ENCODE measurements at regions of chr20 and their contacts with region 1.

Region 1: DNA sequence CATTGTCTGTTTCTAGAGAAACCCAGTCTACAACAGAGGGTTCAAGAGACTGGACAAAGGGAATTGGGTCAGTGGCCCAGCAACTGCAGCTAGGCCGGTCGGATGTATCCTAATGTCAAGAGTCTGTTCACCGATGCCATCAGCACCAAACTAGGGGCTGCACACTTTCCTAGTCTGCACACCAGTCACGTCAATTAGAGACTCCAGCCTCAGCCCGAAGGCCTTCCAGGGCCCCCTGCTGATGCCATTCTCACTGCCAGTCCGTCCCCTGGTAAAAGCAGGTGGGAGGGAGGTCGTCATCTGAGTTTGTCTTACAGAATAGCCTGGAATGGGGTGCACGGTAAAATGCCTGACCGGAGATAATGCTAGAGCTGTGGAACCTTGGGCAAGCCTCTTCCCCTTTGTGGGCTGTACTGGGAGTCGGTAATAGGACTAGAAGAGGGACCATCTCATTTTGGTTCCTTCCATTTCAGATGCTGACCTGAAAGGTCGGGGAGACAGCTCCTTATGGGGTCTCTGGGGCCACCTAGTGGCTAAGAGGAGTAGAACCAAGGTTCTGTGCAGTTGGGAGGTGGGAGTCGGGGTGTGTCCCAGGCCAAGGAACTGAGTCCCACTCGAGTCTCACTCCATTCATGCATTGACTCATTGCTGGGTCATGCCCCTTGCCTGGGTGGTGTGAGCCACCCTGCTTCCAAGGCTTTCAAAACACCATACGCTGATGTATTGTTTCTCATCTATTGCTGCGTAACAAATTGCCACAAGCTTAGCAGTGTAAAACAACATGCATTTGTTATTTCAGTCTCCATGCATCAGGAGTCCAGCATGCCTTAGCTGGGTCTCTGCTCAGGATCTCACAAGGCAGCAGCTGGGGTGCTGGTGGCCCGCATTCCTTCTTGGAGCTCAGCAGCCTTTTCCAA is 5.1 kb downstream of the SOX12 start:
- DNase-seq: peak; percentile 82 to 90 (median 88)
- H3K4me3 ChIP-seq: peak overlapping the region in 1 of 7 experiments; percentile 37
- H3K27ac ChIP-seq: no peak overlapping the region
- H3K4me1 ChIP-seq: peaks cover 10 to 38% (median 33%) of the 10 kb centered on the region in 4 experiments
- H3K27me3 ChIP-seq: no peaks in the 10 kb centered on the region

Region 2: GRCh38 chr20:152131-152530 is 178.4 kb before region 1 on chr20:
- CTCF ChIA-PET with region 1: no interaction called
- POLR2A ChIA-PET with region 1: no interaction called
- DNase-seq: no peak
- H3K4me3 ChIP-seq: no peak overlapping the region
- H3K27ac ChIP-seq: no peak overlapping the region
- H3K4me1 ChIP-seq: no peaks in the 10 kb centered on the region
- H3K27me3 ChIP-seq: peaks cover 0 to 11% (median 3%) of the 10 kb centered on the region in 5 experiments

Region 3: DNA sequence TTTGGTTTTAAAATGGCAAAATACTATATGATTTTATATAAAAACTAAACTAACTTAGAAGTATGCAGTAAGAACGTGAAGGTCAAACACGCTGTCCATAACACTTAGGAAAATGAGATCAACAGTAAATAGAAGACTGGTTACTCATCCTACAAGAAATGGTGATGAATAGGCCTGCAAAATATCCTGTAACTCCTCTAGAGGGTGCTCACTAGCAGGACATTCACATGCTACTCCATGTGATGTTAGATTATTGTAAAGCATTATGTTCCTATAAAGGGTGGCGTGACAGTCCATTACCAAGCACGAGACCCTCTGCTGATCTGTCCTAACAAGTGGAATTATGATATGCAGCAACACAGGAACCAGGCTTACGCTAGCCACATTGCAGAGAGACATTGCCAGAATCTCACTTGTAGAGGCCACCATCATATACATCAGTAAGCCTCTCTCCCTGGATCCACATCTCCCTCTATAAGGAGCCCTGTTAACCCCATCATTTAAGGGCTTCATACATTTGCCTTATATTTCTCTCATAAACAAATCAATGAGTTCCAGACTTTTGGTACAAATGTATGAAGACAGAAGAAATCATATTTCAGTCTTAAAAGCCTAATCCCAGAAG is 121.4 kb before region 1 on chr20:
- CTCF ChIA-PET with region 1: interaction called, 11 read pairs
- POLR2A ChIA-PET with region 1: no interaction called
- DNase-seq: peak; percentile 59 to 77 (median 73)
- H3K4me3 ChIP-seq: no peak overlapping the region
- H3K27ac ChIP-seq: no peak overlapping the region
- H3K4me1 ChIP-seq: no peaks in the 10 kb centered on the region
- H3K27me3 ChIP-seq: peaks cover 0 to 5% (median 0%) of the 10 kb centered on the region in 5 experiments

Region 4: GRCh38 chr20:258963-259362 is 71.5 kb before region 1 on chr20:
- CTCF ChIA-PET with region 1: interaction called, 23 read pairs
- POLR2A ChIA-PET with region 1: no interaction called
- DNase-seq: peak; percentile 45 to 70 (median 67)
- H3K4me3 ChIP-seq: no peak overlapping the region
- H3K27ac ChIP-seq: no peak overlapping the region
- H3K4me1 ChIP-seq: peaks cover 0 to 11% (median 0%) of the 10 kb centered on the region in 4 experiments
- H3K27me3 ChIP-seq: no peaks in the 10 kb centered on the region

Region 5: DNA sequence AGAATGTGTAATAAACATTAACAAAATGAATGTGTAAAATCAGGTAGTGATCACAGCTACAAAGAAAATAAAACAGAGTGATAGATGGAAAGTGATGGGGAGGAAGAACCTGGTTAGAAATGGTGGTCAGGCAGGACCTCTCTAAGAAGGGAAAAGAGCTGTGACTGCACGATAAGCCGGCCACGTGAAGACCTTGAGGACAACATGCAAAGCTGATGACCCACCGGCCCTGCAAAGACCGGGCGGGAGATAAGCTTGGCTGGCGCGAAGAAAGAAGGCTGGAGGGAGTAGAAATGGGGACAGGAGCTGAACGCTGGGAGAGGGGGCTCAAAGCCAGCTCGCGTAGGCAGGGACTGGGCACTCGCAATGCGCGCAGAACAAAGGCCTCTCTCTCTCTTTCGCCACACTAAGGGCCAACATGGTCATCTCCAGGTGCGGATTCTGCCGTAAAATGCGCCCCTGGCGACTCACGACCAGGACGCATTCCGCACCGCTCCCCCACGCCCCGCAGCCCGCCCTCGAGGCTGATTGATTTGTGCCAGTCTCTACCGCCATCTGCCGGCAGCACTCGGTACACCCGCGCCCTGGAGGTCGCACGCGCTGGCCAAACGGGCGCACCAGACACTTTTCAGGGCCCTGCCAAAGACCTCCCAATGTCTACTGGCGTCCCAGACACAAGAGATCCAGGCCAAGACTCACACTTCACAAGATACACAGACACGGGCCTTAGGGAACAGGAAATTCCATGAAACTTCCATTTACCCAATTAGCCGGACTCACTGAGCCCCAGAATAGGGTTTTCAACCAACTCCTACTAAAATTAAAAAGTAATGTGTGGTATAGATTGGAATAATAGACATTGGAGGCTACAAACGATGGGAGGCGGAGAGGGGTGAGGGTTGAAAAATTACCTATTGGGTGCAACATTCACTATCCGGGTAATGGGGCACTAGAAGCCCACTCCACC is 63.6 kb before region 1 on chr20:
- CTCF ChIA-PET with region 1: interaction called, 54 read pairs
- POLR2A ChIA-PET with region 1: no interaction called
- DNase-seq: peak; percentile 85 to 91 (median 89)
- H3K4me3 ChIP-seq: peak overlapping the region; percentile 51 to 89 (median 66)
- H3K27ac ChIP-seq: no peak overlapping the region
- H3K4me1 ChIP-seq: peaks cover 0 to 7% (median 5%) of the 10 kb centered on the region in 4 experiments
- H3K27me3 ChIP-seq: no peaks in the 10 kb centered on the region

Region 6: GRCh38 chr20:278607-279571 is 51.6 kb before region 1 on chr20:
- CTCF ChIA-PET with region 1: interaction called, 13 read pairs
- POLR2A ChIA-PET with region 1: no interaction called
- DNase-seq: peak in 1 of 3 donors; percentile 11
- H3K4me3 ChIP-seq: peak overlapping the region in 1 of 7 experiments; percentile 57
- H3K27ac ChIP-seq: no peak overlapping the region
- H3K4me1 ChIP-seq: no peaks in the 10 kb centered on the region
- H3K27me3 ChIP-seq: no peaks in the 10 kb centered on the region

Region 7: GRCh38 chr20:297925-298765 is 32.3 kb before region 1 on chr20:
- CTCF ChIA-PET with region 1: interaction called, 26 read pairs
- POLR2A ChIA-PET with region 1: interaction called, 4 read pairs
- DNase-seq: peak in 2 of 3 donors; percentile 41 to 45
- H3K4me3 ChIP-seq: peak overlapping the region; percentile 86 to 98 (median 97)
- H3K27ac ChIP-seq: peak overlapping the region; percentile 93 to 95
- H3K4me1 ChIP-seq: peaks cover 17 to 45% (median 32%) of the 10 kb centered on the region in 4 experiments
- H3K27me3 ChIP-seq: no peaks in the 10 kb centered on the region

Region 8: DNA sequence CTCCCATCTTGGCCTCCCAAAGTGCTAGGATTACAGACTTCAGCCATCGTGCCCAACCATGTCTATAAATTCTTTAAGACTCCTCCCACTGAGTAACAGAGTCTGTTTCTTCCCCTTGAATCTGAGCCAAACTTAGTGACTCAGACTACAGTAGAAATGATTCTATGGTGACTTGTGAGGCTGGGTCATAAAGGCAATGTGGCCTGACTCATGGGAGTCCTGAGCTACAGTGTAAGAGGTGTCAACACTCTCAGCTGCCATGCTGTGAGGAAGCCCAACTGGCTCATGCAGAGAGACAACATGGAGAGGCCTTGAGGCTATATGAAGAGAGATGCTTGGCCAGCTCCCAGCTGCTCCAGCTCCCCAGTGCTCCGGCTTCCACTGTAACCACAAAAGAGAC is 11.2 kb after region 1 on chr20:
- CTCF ChIA-PET with region 1: interaction called, 17 read pairs
- POLR2A ChIA-PET with region 1: no interaction called
- DNase-seq: peak; percentile 54 to 82 (median 79)
- H3K4me3 ChIP-seq: no peak overlapping the region
- H3K27ac ChIP-seq: no peak overlapping the region
- H3K4me1 ChIP-seq: peaks cover 0 to 11% (median 5%) of the 10 kb centered on the region in 4 experiments
- H3K27me3 ChIP-seq: no peaks in the 10 kb centered on the region

Region 9: GRCh38 chr20:444862-445426 is 114.5 kb after region 1 on chr20:
- CTCF ChIA-PET with region 1: no interaction called
- POLR2A ChIA-PET with region 1: no interaction called
- DNase-seq: no peak
- H3K4me3 ChIP-seq: no peak overlapping the region
- H3K27ac ChIP-seq: no peak overlapping the region
- H3K4me1 ChIP-seq: peaks cover 0 to 4% (median 2%) of the 10 kb centered on the region in 4 experiments
- H3K27me3 ChIP-seq: no peaks in the 10 kb centered on the region

Region 10: GRCh38 chr20:667391-667964 is 337.0 kb after region 1 on chr20:
- CTCF ChIA-PET with region 1: no interaction called
- POLR2A ChIA-PET with region 1: no interaction called
- DNase-seq: peak; percentile 55 to 72 (median 64)
- H3K4me3 ChIP-seq: no peak overlapping the region
- H3K27ac ChIP-seq: no peak overlapping the region
- H3K4me1 ChIP-seq: peaks cover 0 to 32% (median 26%) of the 10 kb centered on the region in 4 experiments
- H3K27me3 ChIP-seq: peaks cover 0 to 49% (median 14%) of the 10 kb centered on the region in 5 experiments